GM10248 (cell line): ENCODE measurements at regions of chr6 and their contacts with region 1.

Region 1: DNA sequence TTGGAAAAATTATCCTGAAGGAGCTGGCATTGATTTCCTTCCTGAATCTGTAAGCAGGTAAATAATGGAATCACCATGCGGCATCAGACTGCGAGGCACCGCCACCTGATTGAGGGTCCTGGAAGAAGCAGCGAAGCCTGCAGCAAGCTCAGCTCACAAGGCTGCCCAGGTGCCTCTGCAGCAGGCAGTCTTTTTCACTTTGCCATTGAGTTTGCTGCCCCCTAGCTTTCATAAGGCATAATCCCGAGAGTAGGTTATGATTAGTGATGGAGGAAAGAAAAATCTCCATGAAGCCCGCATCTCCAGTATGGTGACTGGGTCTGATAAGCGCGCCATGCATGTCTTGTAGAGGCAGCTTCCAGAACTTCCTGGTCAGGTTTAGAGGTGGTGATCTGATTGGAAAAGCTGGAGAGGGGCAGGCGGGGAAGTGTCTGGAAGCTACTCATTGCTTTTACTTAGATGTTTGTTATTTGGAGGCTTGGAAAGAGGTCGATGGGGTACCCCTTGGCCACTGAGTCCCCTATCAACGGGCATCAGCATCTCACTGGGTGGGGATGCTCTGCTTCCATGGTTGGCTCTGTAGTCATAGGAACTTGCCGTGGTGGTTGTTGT is 26.7 kb downstream of the IYD start:
- DNase-seq: peak; percentile 64
- CTCF ChIP-seq: peak; percentile 67

Region 2: DNA sequence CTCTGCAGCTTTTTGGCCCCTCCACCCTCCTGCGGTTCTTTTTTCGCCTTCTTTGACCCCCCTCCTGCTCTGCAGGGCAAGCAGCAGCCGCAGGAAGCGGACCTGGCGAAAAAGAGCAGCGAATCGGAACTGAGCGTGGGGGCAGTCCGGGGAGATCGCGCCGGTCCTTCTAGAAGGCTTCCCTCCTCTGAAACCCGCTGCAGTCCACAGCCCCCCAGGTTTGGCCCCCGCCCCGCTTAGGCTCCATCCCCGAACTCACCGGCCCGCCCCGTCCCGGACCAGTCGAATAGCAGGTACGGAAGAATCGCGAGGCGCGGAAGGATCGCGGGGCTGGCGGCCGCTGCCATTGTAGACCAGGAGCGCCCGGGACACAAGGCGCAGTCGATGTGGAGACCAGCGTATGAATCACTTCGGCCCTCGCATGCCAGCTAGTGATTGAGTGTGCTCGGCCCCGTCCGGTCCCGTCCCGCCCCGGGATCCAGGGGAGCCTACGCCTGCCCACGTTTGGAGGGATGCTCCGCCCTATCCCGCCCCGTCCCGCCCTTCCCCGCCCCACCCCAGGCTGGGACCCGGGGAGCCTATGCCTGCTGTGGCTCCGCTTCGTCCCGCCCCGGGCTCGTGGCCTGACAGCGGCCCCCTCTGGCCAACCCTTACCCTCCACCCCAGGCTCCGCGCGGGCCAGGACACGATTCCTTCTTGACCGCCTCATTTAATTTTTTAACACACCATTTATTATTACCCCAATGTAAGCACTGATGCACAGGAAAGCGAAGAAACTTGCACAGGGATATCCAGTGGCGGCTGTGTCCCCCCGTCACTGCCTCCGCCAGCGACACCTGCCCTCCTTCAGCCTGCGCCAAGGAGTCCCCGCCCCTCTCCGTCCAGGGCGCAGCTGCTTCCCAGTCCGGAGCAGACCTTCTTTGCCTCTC is 326.5 kb before region 1 on chr6 and contains the start of gene ULBP3:
- CTCF ChIA-PET with region 1: interaction called, 19 read pairs
- POLR2A ChIA-PET with region 1: no interaction called
- DNase-seq: peak; percentile 83
- CTCF ChIP-seq: peak; percentile 56

Region 3: GRCh38 chr6:150079604-150080003 is 315.9 kb before region 1 on chr6:
- CTCF ChIA-PET with region 1: interaction called, 65 read pairs
- POLR2A ChIA-PET with region 1: no interaction called
- DNase-seq: no peak
- CTCF ChIP-seq: no peak

Region 4: DNA sequence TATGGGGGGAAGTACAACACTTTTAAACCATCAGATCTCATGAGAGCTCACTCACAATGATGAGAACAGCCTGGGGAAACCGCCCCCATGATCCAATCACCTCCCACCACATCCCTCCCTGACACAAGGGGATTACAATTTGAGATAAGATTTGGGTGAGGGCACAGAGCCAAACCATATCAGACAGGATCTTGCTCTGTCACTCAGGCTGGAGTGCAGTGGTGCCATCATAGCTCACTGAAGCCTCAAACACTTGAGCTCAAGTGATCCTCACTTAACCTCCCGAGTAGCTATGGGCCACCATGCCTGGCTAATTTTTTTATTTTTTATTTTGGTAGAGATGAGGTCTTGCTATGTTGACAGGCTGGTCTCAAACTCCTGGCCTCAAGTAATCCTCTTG is 31.8 kb before region 1 on chr6:
- CTCF ChIA-PET with region 1: interaction called, 14 read pairs
- POLR2A ChIA-PET with region 1: no interaction called
- DNase-seq: no peak
- CTCF ChIP-seq: no peak

Region 5: GRCh38 chr6:150380256-150380655 is 15.2 kb before region 1 on chr6:
- CTCF ChIA-PET with region 1: interaction called, 30 read pairs
- POLR2A ChIA-PET with region 1: no interaction called
- DNase-seq: no peak
- CTCF ChIP-seq: no peak

Region 6: GRCh38 chr6:150409576-150410066 is 14.1 kb after region 1 on chr6:
- CTCF ChIA-PET with region 1: interaction called, 43 read pairs
- POLR2A ChIA-PET with region 1: no interaction called
- DNase-seq: no peak
- CTCF ChIP-seq: no peak

Region 7: GRCh38 chr6:150417899-150418826 is 22.7 kb after region 1 on chr6:
- CTCF ChIA-PET with region 1: interaction called, 11 read pairs
- POLR2A ChIA-PET with region 1: no interaction called
- DNase-seq: peak; percentile 72
- CTCF ChIP-seq: peak; percentile 83